ENCODE measurements at regions of chr22 and their contacts with region 1.

Region 1: GRCh38 chr22:22168190-22168940 is 76.2 kb upstream of the VPREB1 start:
- DNase-seq: peak; percentile 31
- ATAC-seq: peak; percentile 54
- H3K4me3 Mint-ChIP-seq: peak overlapping the region; percentile 84
- H3K27ac Mint-ChIP-seq: peak overlapping the region; percentile 97
- H3K4me1 Mint-ChIP-seq: peaks cover 86% of the 10 kb centered on the region
- H3K27me3 Mint-ChIP-seq: no peaks in the 10 kb centered on the region
- CTCF ChIP-seq: no peak

Region 2: DNA sequence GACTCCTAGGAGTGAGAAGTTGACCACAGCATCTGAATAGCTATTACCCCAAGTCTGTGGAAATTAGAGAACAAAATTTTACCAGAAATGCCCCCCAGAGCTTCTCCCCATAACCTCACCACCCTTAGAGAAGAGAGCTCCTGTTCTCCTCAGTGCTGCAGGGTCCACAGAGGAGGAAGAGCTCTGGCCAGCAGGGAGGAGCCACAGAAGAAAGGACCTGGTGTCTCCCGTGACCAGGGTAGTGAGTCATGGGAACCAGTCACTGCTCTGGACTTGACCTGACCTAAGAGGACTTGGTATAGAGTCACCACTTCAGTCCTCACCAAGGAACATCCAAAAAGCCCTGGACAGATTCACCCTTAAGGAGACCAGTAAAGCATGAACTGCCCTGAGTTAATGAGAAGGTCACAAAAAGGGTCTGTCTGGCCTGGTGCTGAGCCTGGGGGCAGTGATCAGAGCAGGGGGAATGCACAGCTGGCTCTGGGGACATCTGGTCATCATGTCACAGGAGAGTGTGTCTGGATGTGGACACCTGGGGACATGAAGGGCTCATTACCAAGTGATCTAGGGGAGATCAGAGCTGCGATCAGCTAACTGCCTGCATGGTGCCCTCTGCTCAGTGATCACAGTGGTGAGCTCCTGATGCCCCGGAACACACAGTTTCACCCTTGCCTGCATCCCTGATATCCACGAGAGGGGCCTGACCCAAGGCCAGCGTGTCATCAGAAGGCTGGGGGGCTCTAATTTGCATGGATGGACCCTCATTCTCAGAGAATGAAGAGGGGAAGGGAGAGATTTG is 82.5 kb before region 1 on chr22:
- CTCF ChIA-PET with region 1: no interaction called
- POLR2A ChIA-PET with region 1: no interaction called
- intact Hi-C with region 1: no loop called
- DNase-seq: no peak
- ATAC-seq: no peak
- H3K4me3 Mint-ChIP-seq: no peak overlapping the region
- H3K27ac Mint-ChIP-seq: no peak overlapping the region
- H3K4me1 Mint-ChIP-seq: peaks cover 5% of the 10 kb centered on the region
- H3K27me3 Mint-ChIP-seq: no peaks in the 10 kb centered on the region
- CTCF ChIP-seq: no peak

Region 3: DNA sequence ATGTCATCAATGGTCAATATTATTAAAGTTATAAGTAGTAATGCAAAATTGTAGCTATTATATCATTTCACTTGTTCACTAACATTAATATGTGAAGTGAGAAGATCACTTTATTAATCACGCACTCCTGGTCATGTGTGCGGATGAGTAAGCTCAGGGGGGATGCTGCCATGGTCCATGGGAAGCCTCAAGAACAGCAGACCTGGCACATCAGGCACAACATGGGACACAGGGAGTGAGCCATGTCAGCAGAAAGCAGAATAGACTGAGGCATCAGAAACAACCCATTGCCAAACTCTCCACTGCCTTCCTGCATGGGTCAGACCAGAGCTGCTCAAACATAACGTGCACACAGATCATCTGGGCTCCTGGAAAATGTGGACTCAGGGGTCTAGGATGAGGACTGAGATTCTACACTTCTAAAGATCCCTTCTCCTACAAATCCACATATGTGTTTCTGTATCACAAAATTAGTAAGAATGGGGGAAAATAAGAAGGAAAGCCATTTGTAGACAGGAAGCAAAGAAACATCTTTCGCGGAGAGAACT is 12.4 kb after region 1 on chr22:
- CTCF ChIA-PET with region 1: interaction called, 6 read pairs
- POLR2A ChIA-PET with region 1: interaction called, 21 read pairs
- intact Hi-C with region 1: loop called (anchors 2 kb)
- DNase-seq: no peak
- ATAC-seq: no peak
- H3K4me3 Mint-ChIP-seq: no peak overlapping the region
- H3K27ac Mint-ChIP-seq: no peak overlapping the region
- H3K4me1 Mint-ChIP-seq: peaks cover 38% of the 10 kb centered on the region
- H3K27me3 Mint-ChIP-seq: no peaks in the 10 kb centered on the region
- CTCF ChIP-seq: no peak